Left ventricle myocardium inferior (tissue), 1 donor: ENCODE measurements at regions of chr15 and their contacts with region 1.

Region 1: DNA sequence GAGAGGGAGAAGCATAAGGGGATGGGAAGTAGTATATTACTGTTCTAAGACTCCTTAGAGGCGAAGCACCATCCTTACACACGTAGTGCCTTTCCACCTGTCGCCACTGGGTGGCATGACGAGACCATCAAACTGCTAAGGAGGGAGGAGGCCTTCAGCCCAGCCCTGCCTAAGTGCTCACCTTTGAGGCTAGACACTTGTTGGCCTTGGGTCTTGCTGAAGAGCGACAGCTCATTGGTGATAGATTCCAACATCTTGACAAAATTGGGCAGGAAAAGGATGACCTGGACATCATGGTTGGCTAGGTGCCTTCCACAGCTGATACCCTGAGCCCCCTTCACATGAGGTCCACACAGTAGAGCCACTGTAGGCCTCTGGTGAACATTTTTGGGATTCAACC is 19.6 kb downstream of the CLK3 start:
- DNase-seq: peak; percentile 44
- H3K4me3 ChIP-seq: no peak overlapping the region
- H3K27ac ChIP-seq: no peak overlapping the region
- H3K4me1 ChIP-seq: peaks cover 3% of the 10 kb centered on the region
- H3K27me3 ChIP-seq: no peaks in the 10 kb centered on the region
- CTCF ChIP-seq: peak; percentile 90

Region 2: DNA sequence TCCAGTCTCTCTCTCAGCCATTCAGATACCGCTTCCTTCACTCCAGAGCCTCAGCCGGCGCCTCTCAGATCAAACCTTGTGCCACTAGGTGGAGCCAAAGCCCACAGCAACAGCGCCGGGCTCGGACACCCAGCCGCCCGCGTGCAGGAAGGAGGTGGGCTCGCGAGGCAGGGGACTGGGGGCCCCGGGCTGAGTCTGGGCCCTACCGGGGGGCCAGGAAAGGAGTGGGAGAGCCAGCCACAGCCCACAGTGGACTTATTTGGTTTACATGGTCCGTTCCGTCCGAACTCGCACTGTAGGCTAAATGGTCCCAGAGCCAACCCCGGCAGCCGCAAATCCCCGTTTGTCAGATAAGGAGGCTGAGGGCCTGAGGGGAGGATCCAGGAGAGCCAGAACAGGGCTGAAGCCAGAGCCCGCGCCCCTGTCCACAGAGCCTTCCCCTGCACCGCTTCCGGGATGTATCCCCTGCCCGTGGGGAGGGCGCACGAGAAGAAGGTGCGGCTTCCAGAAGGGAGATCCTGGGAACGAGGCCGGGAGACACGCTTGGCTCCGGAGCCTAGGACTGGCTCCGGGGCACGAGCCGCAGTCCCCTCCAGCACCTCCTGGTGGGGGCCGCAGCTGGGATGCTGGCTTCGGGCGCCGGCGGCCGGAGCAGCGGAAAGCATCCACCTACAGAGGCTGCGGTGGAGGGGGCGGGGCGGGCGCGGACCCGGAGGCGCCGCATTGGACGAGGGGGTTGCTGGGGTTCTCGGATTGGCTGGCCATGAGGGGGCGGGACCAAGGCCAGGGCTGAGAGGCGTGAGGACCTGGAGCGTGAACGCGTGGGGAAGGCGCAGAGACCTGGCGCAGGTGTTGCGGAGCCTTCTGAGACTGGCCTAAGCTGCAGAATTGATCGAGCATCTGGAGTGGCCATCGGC is 261.2 kb before region 1 on chr15:
- intact Hi-C with region 1: loop called (anchors 10 kb)
- DNase-seq: peak; percentile 94
- H3K4me3 ChIP-seq: peak overlapping the region; percentile 77
- H3K27ac ChIP-seq: no peak overlapping the region
- H3K4me1 ChIP-seq: peaks cover 19% of the 10 kb centered on the region
- H3K27me3 ChIP-seq: peaks cover 19% of the 10 kb centered on the region
- CTCF ChIP-seq: peak; percentile 92

Region 3: GRCh38 chr15:74384854-74385643 is 250.2 kb before region 1 on chr15:
- intact Hi-C with region 1: no loop called
- DNase-seq: no peak
- H3K4me3 ChIP-seq: peak overlapping the region; percentile 11
- H3K27ac ChIP-seq: peak overlapping the region; percentile 78
- H3K4me1 ChIP-seq: peaks cover 40% of the 10 kb centered on the region
- H3K27me3 ChIP-seq: peaks cover 6% of the 10 kb centered on the region
- CTCF ChIP-seq: no peak

Region 4: GRCh38 chr15:74748322-74748946 is 113.2 kb after region 1 on chr15 and contains the start of gene CYP1A2:
- intact Hi-C with region 1: no loop called
- DNase-seq: no peak
- H3K4me3 ChIP-seq: no peak within 1 kb of the TSS
- H3K27ac ChIP-seq: no peak within 1 kb of the TSS
- H3K4me1 ChIP-seq: no peaks in the 10 kb centered on the region
- H3K27me3 ChIP-seq: no peaks in the 10 kb centered on the region
- CTCF ChIP-seq: no peak
- total RNA-seq, gene CYP1A2: not detected